Activated T-helper 2 cell treated with anti-CD3 and anti-CD28 coated beads, Interferon-gamma antibody, Interleukin-2, Interleukin-4, amounts not matched to agents 10 μg/mL and 5 μg/mL and 100 μg/mL, durations not matched to agents 14 hours and 24 hours and 36 hours (primary cell): ENCODE measurements at regions of chr3 and their contacts with region 1.

Region 1: DNA sequence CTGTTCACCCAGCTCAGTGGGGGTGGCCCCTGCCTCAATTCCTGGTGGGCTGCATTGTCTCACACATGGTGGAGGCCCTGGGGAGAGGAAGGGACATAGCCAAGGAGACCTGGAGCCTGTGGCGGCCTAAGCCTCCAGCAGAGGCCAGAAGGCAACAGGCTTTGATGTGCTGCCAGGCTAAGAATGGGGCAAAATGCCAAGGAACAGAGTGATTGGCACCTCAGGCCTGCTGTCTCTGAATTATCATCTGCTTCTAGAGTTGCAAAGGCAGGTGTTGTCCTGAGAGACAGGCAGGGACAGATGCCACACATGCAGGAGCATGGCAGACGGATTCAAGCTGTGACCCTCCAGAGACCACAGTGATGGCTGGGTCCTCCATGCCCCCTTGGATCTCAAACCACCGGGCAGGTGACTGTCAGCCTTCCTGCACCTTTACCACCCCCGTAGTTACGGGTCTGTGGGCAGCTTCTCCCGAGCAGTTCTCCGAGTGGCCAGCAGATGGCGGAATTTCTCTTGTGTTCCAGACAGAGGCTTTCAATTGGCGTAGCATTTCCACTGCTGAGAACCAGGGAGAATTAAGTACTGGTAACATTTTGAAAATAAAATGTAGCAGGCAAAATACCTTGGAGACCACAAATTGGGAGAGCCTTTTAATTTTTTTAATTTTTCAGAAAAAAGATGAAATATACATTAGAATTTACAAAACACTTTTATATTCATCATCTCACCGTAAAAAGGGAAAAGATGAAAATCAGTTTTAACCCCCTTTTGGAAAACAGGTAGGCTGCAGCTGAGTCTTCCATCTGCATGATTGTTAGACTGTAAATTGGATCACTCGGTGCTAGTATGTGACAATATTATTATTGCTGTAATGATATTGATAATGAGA is 525.5 kb upstream of the CFAP20DC start:
- DNase-seq: peak; percentile 73
- H3K4me3 Mint-ChIP-seq: no peak overlapping the region
- H3K27ac Mint-ChIP-seq: no peak overlapping the region
- H3K4me1 Mint-ChIP-seq: peaks cover 4% of the 10 kb centered on the region
- H3K27me3 Mint-ChIP-seq: peaks cover 2% of the 10 kb centered on the region

Region 2: GRCh38 chr3:59212128-59212779 is 363.1 kb before region 1 on chr3:
- intact Hi-C with region 1: loop called (anchors 5 kb)
- DNase-seq: no peak
- H3K4me3 Mint-ChIP-seq: no peak overlapping the region
- H3K27ac Mint-ChIP-seq: no peak overlapping the region
- H3K4me1 Mint-ChIP-seq: no peaks in the 10 kb centered on the region
- H3K27me3 Mint-ChIP-seq: peaks cover 12% of the 10 kb centered on the region

Region 3: GRCh38 chr3:59313365-59313764 is 262.0 kb before region 1 on chr3:
- intact Hi-C with region 1: loop called (anchors 2 kb)
- DNase-seq: peak; percentile 15
- H3K4me3 Mint-ChIP-seq: no peak overlapping the region
- H3K27ac Mint-ChIP-seq: no peak overlapping the region
- H3K4me1 Mint-ChIP-seq: peaks cover 8% of the 10 kb centered on the region
- H3K27me3 Mint-ChIP-seq: peaks cover 3% of the 10 kb centered on the region

Region 4: GRCh38 chr3:59809710-59810444 is 234.5 kb after region 1 on chr3:
- intact Hi-C with region 1: loop called (anchors 1 kb)
- DNase-seq: no peak
- H3K4me3 Mint-ChIP-seq: no peak overlapping the region
- H3K27ac Mint-ChIP-seq: no peak overlapping the region
- H3K4me1 Mint-ChIP-seq: peaks cover 7% of the 10 kb centered on the region
- H3K27me3 Mint-ChIP-seq: no peaks in the 10 kb centered on the region

Region 5: DNA sequence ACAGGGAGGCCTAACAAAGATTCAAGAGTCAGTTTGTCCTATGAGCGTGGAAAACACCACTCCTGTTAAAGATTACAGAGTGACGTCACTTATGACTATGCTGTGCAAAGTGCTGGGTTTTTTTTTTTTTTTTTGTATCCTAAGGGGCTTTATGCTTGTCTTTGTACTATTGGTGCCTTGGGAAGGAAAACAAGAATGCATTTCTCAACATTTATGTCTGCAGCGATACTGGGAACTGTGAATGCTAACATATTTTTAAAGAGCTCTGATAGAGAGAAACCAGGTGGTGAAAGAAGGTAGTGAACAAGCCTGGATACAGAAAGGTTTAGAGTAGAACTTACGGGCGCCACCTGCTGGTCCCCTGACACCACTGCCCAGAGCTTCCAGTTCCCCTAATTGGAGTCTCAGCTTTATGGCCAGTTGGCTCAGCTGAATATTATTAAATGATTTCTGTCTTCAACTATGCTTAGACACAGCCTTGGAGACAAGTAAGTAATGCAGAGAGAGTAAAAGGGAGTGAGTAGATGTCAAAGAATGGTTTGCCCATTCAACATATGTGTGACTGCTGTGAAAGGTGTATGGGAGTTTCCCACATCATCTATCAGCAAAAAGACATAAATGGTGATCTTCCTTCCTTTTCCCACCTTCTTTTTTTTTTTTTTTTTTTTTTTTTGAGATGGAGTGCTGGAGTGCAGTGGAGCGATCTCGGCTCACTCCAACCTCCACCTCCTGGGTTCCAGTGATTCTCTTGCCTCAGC is 282.4 kb after region 1 on chr3:
- intact Hi-C with region 1: loop called (anchors 1 kb)
- DNase-seq: peak; percentile 51
- H3K4me3 Mint-ChIP-seq: no peak overlapping the region
- H3K27ac Mint-ChIP-seq: no peak overlapping the region
- H3K4me1 Mint-ChIP-seq: peaks cover 4% of the 10 kb centered on the region
- H3K27me3 Mint-ChIP-seq: no peaks in the 10 kb centered on the region

Region 6: GRCh38 chr3:61381745-61382392 is 1806.5 kb after region 1 on chr3:
- intact Hi-C with region 1: loop called (anchors 5 kb)
- DNase-seq: no peak
- H3K4me3 Mint-ChIP-seq: no peak overlapping the region
- H3K27ac Mint-ChIP-seq: no peak overlapping the region
- H3K4me1 Mint-ChIP-seq: peaks cover 3% of the 10 kb centered on the region
- H3K27me3 Mint-ChIP-seq: peaks cover 20% of the 10 kb centered on the region